Activated CD4-positive, alpha-beta T cell treated with anti-CD3 and anti-CD28 coated beads, Interleukin-2, amount 10 ng/mL, durations not matched to agents 24 days and 14 days (primary cell): ENCODE measurements at regions of chr1 and their contacts with region 1.

Region 1: GRCh38 chr1:33036526-33037503 is at the start of gene AK2:
- DNase-seq: peak; percentile 98
- H3K4me3 Mint-ChIP-seq: peak within 1 kb of the TSS; percentile 90
- H3K27ac Mint-ChIP-seq: peak within 1 kb of the TSS; percentile 94
- H3K4me1 Mint-ChIP-seq: peaks cover 45% of the 10 kb centered on the region
- H3K27me3 Mint-ChIP-seq: no peaks in the 10 kb centered on the region
- total RNA-seq, gene AK2: 424 and 429 TPM in 2 replicates

Region 2: DNA sequence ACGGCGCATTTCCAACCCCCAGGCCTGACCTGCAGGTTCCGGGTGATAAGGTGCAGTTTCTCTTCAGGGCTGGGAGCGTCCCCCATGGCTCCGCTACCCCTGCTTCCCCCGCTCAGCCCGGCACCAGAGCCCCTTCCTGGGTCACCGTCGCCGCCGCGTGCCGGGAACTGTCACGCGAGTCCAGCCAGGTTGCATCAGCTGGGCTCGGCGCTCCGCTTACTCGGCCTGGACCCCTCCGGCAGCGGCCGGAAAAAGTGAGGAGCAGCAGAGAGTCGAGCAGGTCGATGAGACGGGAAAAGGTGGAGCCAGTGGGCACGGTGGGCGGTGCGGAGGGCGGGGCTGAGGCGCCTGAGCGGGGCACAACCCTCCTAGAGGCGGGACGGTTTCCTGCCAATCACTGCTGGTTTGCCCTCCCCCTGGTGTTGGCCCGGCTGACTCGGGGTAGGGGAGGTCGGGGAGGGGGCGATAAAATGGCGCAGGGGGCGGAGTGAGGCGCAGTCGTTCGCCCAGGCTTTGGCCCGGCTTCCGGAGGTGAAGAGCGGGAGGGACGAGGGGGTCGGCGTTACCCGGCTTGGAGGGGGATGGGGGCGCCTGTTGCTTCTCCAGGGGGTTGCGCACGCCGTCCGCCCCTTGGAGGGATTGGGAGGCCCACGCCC is 219.5 kb before region 1 on chr1 and contains the starts of genes S100PBP and YARS1:
- intact Hi-C with region 1: loop called (anchors 5 kb)
- DNase-seq: peak; percentile 100
- H3K4me3 Mint-ChIP-seq: peak within 1 kb of the TSS; percentile 99
- H3K27ac Mint-ChIP-seq: peak within 1 kb of the TSS; percentile 98
- H3K4me1 Mint-ChIP-seq: peaks cover 51% of the 10 kb centered on the region
- H3K27me3 Mint-ChIP-seq: no peaks in the 10 kb centered on the region
- total RNA-seq, gene S100PBP: 43.8 and 46.9 TPM in 2 replicates
- total RNA-seq, gene YARS1: 206 and 214 TPM in 2 replicates

Region 3: DNA sequence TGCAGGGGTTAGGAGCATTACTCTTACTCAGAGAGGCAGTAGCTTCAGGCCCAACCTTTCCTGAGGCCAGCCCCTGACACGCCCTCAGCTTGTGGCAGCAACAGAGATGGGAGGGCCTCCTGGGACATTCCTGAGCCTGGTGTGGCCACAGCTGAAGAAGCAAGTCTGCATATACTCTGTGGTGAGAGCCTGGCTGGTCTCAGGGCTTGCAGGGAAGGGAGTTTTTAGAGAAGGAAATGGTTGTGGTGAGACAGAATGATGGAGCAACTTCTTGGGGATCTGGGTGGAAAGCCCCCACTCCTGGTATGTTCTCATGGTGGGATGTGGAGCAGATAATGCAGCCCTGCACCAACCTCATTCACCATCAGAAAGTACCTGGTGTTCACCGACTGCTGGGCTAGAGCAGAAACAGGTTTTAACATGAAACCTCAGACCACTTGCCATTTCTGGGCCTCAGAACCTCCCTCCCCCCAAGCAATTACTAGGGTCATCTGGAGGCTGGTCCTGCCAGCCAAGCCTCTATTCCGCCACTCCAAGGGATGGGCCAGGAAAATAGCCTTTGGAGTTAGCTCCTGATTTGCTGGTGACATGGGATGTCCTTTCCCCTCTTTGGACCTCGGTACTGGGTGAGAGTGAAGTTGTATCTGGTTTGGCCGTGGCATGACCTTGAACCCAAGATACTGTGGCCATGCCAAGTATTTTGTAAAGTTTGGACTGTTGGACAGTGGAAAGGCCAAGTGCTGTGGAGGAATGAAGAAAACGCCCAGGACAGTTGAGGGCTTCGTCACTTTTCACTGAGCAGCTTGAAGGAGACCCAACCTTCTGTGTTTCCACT is 44.1 kb before region 1 on chr1:
- intact Hi-C with region 1: loop called (anchors 2 kb)
- DNase-seq: peak; percentile 92
- H3K4me3 Mint-ChIP-seq: peak overlapping the region; percentile 68
- H3K27ac Mint-ChIP-seq: peak overlapping the region; percentile 82
- H3K4me1 Mint-ChIP-seq: peaks cover 68% of the 10 kb centered on the region
- H3K27me3 Mint-ChIP-seq: no peaks in the 10 kb centered on the region

Region 4: GRCh38 chr1:33094971-33095604 is 58.3 kb after region 1 on chr1:
- intact Hi-C with region 1: loop called (anchors 1 kb)
- DNase-seq: peak; percentile 77
- H3K4me3 Mint-ChIP-seq: no peak overlapping the region
- H3K27ac Mint-ChIP-seq: no peak overlapping the region
- H3K4me1 Mint-ChIP-seq: peaks cover 59% of the 10 kb centered on the region
- H3K27me3 Mint-ChIP-seq: no peaks in the 10 kb centered on the region